K562 (cell line): ENCODE measurements at regions of chr17 and their contacts with region 1.

Region 1: GRCh38 chr17:43546319-43547188 is at the start of gene ETV4:
- DNase-seq: peak; percentile 96 to 99 (median 98)
- ATAC-seq: peak; percentile 88
- H3K4me3 ChIP-seq: peak within 1 kb of the TSS; percentile 73
- H3K27ac ChIP-seq: peak within 1 kb of the TSS; percentile 64
- H3K4me1 ChIP-seq: peaks cover 27 to 36% of the 10 kb centered on the region in 2 experiments
- H3K27me3 ChIP-seq: no peaks in the 10 kb centered on the region
- CTCF ChIP-seq: no peak
- EP300 ChIP-seq: no peak
- POLR2A ChIP-seq: peak; percentile 66
- RAD21 ChIP-seq: no peak
- polyA plus RNA-seq, gene ETV4: 5.5 to 7.6 TPM

Region 2: DNA sequence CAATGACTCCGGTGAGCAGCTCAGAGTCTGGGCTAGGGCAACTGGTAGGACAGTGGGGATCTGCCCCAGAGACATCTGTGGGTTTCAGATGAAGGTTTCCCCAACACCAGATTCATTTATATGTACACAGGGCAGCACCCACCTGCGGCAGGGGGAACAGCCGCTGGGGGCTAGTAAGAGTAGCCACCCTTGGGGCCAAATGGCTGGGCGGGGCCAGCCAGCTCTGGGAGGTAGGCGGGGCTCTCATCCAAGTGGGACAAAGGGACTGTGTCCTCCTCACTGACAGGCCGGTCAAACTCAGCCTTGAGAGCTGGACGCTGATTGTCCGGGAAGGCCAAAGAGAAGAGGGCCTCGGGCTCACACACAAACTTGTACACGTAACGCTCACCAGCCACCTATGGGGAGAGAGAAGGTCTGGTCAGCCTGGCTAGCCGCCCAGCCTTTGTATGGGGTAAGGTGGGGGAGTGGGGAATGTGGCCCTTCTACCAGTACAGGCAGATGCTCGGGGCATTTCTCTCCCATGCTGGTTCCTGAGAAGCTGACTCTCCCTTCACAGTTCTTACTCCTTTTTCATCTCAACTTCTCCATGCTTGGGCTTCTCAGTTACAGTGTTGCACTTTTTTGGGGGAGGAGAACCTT is 18.1 kb before region 1 on chr17:
- CTCF ChIA-PET with region 1: no interaction called
- POLR2A ChIA-PET with region 1: interaction called, 14 read pairs
- in situ Hi-C with region 1: no loop called
- intact Hi-C with region 1: no loop called
- DNase-seq: peak in 3 of 4 experiments; percentile 31 to 40 (median 38)
- ATAC-seq: peak; percentile 49
- H3K4me3 ChIP-seq: no peak overlapping the region
- H3K27ac ChIP-seq: 0 out of 3 replicates have a peak overlapping the region, but pooled peaks have one; percentile 10
- H3K4me1 ChIP-seq: peaks cover 22 to 26% of the 10 kb centered on the region in 2 experiments
- H3K27me3 ChIP-seq: no peaks in the 10 kb centered on the region
- CTCF ChIP-seq: no peak
- EP300 ChIP-seq: no peak
- POLR2A ChIP-seq: 0 out of 2 replicates have a peak, but pooled peaks have one; percentile 14
- RAD21 ChIP-seq: no peak

Region 3: GRCh38 chr17:43576563-43577229 is 30.1 kb after region 1 on chr17:
- CTCF ChIA-PET with region 1: no interaction called
- POLR2A ChIA-PET with region 1: no interaction called
- in situ Hi-C with region 1: no loop called
- intact Hi-C with region 1: no loop called
- DNase-seq: peak; percentile 80 to 93 (median 89)
- ATAC-seq: peak; percentile 99
- H3K4me3 ChIP-seq: no peak overlapping the region
- H3K27ac ChIP-seq: no peak overlapping the region
- H3K4me1 ChIP-seq: no peaks in the 10 kb centered on the region
- H3K27me3 ChIP-seq: peaks cover 22 to 33% of the 10 kb centered on the region in 2 experiments; a peak in 4 of 5 replicates
- CTCF ChIP-seq: peak; percentile 92 to 95 (median 93)
- EP300 ChIP-seq: no peak
- POLR2A ChIP-seq: no peak
- RAD21 ChIP-seq: peak; percentile 83 to 96

Region 4: GRCh38 chr17:43814714-43815113 is 268.2 kb after region 1 on chr17:
- CTCF ChIA-PET with region 1: no interaction called
- POLR2A ChIA-PET with region 1: no interaction called
- in situ Hi-C with region 1: no loop called
- intact Hi-C with region 1: no loop called
- DNase-seq: no peak
- ATAC-seq: no peak
- H3K4me3 ChIP-seq: no peak overlapping the region
- H3K27ac ChIP-seq: no peak overlapping the region
- H3K4me1 ChIP-seq: peaks cover 0 to 3% of the 10 kb centered on the region in 2 experiments; a peak in 1 of 5 replicates
- H3K27me3 ChIP-seq: 0 out of 5 replicates have a peak, but pooled peaks cover 0 to 9% of the 10 kb centered on the region in 2 experiments
- CTCF ChIP-seq: no peak
- EP300 ChIP-seq: no peak
- POLR2A ChIP-seq: no peak
- RAD21 ChIP-seq: no peak